ENCODE measurements at regions of chr3 and their contacts with region 1.

Region 1: DNA sequence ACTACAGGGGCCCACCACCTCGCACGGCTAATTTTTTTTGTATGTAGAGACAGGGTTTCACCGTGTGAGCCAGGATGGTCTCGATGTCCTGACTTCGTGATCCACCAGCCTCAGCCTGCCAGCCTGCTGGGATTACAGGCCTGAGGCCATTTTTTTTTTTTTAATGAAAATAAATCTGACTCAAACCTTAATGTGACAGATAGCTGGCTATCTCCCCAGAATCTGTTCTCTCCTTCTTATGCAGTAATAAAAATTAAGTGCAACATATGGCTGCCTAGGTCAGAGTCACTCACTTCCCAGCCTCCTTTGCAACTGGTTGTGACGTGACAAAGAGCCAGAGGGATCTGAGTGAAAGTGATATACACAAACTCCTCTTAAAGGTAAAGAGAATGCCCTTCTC is 53.0 kb downstream of the ZNF148 start:
- DNase-seq: no peak
- ATAC-seq: no peak
- H3K4me3 ChIP-seq: no peak overlapping the region
- H3K4me3 Mint-ChIP-seq: no peak overlapping the region
- H3K27ac ChIP-seq: no peak overlapping the region
- H3K27ac Mint-ChIP-seq: no peak overlapping the region
- H3K4me1 ChIP-seq: peaks cover 0 to 2% of the 10 kb centered on the region in 2 donors
- H3K4me1 Mint-ChIP-seq: peaks cover 11% of the 10 kb centered on the region
- H3K27me3 ChIP-seq: no peaks in the 10 kb centered on the region
- H3K27me3 Mint-ChIP-seq: no peaks in the 10 kb centered on the region
- CTCF ChIP-seq: no peak

Region 2: GRCh38 chr3:123859177-123859576 is 1463.0 kb before region 1 on chr3:
- CTCF ChIA-PET with region 1: no interaction called
- POLR2A ChIA-PET with region 1: no interaction called
- intact Hi-C with region 1: no loop called
- DNase-seq: no peak
- ATAC-seq: no peak
- H3K4me3 ChIP-seq: no peak overlapping the region
- H3K4me3 Mint-ChIP-seq: no peak overlapping the region
- H3K27ac ChIP-seq: no peak overlapping the region
- H3K27ac Mint-ChIP-seq: no peak overlapping the region
- H3K4me1 ChIP-seq: no peaks in the 10 kb centered on the region
- H3K4me1 Mint-ChIP-seq: no peaks in the 10 kb centered on the region
- H3K27me3 ChIP-seq: no peaks in the 10 kb centered on the region
- H3K27me3 Mint-ChIP-seq: peaks cover 2% of the 10 kb centered on the region
- CTCF ChIP-seq: no peak

Region 3: GRCh38 chr3:125289429-125289981 is 32.7 kb before region 1 on chr3:
- CTCF ChIA-PET with region 1: no interaction called
- POLR2A ChIA-PET with region 1: no interaction called
- intact Hi-C with region 1: loop called (anchors 5 kb)
- DNase-seq: no peak
- ATAC-seq: no peak
- H3K4me3 ChIP-seq: no peak overlapping the region
- H3K4me3 Mint-ChIP-seq: no peak overlapping the region
- H3K27ac ChIP-seq: no peak overlapping the region
- H3K27ac Mint-ChIP-seq: no peak overlapping the region
- H3K4me1 ChIP-seq: no peaks in the 10 kb centered on the region
- H3K4me1 Mint-ChIP-seq: peaks cover 25% of the 10 kb centered on the region
- H3K27me3 ChIP-seq: no peaks in the 10 kb centered on the region
- H3K27me3 Mint-ChIP-seq: no peaks in the 10 kb centered on the region
- CTCF ChIP-seq: no peak